ENCODE measurements at regions of chr15 and their contacts with region 1.

Region 1: GRCh38 chr15:33226559-33227181 is 32.2 kb upstream of the FMN1 start:
- DNase-seq: peak; percentile 76
- H3K4me3 ChIP-seq: no peak overlapping the region
- H3K27ac ChIP-seq: no peak overlapping the region
- H3K4me1 ChIP-seq: peaks cover 4% of the 10 kb centered on the region
- CTCF ChIP-seq: peak; percentile 74

Region 2: GRCh38 chr15:33021806-33022389 is 204.8 kb before region 1 on chr15:
- CTCF ChIA-PET with region 1: no interaction called
- POLR2A ChIA-PET with region 1: no interaction called
- intact Hi-C with region 1: loop called (anchors 10 kb)
- DNase-seq: peak; percentile 49
- H3K4me3 ChIP-seq: no peak overlapping the region
- H3K27ac ChIP-seq: no peak overlapping the region
- H3K4me1 ChIP-seq: no peaks in the 10 kb centered on the region
- CTCF ChIP-seq: peak; percentile 91

Region 3: DNA sequence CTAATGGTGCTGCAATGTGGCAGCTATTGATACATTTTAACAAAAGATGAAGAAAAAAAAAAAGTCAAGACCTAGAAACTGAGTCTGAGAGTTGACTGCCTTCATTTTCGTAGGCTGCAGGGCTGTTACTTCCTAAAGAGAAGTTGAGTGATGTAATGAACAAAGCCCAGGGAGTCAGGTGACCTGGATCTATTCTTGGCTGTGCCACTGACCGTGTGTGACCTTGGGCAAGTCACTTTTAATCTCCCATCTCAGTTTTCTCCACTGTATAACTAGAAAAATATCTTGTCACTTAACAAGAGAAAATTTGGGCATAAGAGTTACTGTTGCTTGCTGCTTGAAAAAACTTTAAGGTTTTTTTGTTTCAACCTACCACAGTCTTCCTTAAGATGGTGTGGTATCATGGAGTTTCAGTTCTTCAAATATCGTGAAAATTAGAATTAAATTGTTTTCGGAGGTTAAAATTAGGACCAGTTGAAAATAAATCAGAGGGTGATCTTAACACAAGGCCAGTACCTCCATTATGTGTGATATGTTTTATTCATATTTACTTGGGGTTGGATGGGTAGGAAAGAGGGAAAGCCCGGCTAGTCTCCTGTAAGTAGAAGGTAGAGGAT is 37.9 kb before region 1 on chr15:
- CTCF ChIA-PET with region 1: no interaction called
- POLR2A ChIA-PET with region 1: no interaction called
- intact Hi-C with region 1: loop called (anchors 5 kb)
- DNase-seq: peak; percentile 81
- H3K4me3 ChIP-seq: peak overlapping the region; percentile 49
- H3K27ac ChIP-seq: peak overlapping the region; percentile 81
- H3K4me1 ChIP-seq: peaks cover 46% of the 10 kb centered on the region
- CTCF ChIP-seq: no peak

Region 4: DNA sequence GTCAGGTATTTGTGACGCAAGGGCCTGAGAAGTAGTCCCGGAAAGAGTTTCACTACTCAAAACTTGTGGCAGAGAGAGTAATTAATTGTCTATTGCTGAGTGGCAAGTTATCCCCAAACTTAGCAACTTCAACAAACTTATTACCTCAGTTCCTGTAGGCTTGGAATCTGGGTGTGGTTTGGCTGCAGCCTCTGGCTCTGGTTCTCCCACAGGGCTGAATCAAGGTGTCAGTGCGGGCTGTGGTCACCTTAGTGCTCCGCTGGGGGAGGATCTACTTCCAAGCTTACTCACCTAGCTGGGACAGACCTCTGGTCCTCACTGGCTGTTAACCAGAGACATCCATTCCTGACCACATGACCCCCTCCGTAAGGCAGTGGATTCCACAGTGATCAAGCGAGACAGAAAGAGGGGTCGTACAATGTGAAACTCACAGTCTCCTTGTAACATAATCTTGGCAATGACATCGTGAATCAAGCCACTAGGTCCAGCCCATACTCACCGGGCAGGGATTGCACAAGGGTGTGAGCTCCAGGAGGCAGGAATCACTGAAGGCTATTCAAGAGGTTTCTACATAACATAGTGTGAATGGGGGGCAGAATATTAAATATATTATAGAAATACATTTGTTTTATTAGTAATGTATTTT is 222.4 kb after region 1 on chr15:
- CTCF ChIA-PET with region 1: no interaction called
- POLR2A ChIA-PET with region 1: no interaction called
- intact Hi-C with region 1: loop called (anchors 5 kb)
- DNase-seq: no peak
- H3K4me3 ChIP-seq: no peak overlapping the region
- H3K27ac ChIP-seq: no peak overlapping the region
- H3K4me1 ChIP-seq: no peaks in the 10 kb centered on the region
- CTCF ChIP-seq: no peak